Activated B cell treated with CpG ODN at 0.5 μM for 24 hours (primary cell): ENCODE measurements at regions of chr20 and their contacts with region 1.

Region 1: DNA sequence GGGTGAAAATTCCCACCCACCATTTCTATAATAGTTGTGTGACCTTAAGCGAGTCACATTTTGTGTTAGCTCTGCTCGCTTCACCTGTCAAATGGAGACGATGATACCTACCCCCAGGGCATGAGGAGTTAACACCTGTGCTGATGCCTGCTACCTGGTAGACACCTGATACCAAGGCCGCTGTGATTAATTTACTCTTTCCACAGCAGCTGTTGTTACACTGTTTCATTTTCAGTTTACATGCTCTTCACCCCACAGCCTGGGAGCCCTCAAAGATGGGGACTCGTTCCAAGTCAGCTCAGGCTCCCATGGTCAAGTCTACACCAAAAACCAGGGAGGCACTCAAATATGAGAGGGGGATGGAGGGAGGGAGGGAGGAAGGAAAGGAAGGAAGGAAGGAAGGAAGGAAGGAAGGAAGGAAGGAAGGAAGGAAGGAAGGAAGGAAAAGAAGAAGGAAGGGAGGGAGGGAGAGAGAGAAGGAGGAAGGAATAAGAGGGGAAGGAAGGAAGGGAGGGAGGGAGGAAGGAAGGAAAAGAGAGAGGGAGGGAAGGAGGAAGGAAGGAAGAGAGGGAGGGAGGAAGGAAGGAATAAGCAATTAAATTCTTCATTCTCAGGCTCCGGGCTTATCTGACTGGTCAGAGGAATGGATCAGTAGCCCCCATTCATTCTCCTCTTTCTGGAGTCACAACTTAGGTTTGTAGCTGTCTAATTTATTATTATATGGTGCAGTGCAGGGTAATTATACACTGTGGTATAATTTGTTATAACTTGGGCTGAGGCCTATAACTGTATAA is 40.9 kb downstream of the PDYN start:
- DNase-seq: no peak
- ATAC-seq: peak; percentile 15
- H3K4me3 Mint-ChIP-seq: peak overlapping the region; percentile 55
- H3K27ac Mint-ChIP-seq: peak overlapping the region; percentile 99
- H3K4me1 Mint-ChIP-seq: peaks cover 45% of the 10 kb centered on the region
- H3K27me3 Mint-ChIP-seq: no peaks in the 10 kb centered on the region
- CTCF ChIP-seq: no peak

Region 2: DNA sequence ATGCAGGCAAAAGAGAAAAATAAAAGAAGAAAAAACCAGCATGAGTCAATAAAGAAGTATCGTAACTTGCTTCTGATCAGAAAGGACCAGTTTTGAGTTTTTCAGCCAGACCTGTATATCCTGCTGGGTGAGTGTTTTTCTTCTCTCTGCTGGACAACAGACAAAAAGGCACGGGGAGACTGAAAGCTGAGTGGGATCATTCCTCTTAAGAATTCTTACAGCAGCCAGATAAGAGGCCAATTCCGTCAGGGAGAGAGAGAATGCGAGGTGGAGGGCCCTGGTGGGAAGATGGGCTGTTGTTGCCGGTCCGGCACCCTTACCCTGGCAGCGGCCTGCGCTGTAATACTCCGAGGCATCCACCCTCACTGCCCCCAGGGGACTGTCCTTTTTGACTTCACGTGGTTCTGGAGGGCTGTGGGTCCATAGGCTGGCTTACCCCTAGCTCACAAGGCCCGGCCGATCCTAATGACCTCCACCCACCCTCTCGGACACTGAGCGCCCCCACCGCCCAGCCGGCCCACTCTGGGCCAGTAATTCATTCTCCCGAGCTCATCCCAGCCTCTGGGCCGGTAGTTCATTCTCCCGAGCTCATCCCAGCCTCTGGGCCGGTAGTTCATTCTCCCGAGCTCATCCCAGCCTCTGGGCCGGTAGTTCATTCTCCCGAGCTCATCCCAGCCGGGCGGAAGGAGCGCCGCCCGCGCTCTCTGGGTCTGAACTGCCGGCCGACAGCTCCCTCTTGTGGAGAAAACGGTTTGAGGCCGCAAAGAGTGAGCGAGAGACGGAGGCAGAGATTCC is 176.1 kb before region 1 on chr20:
- CTCF ChIA-PET with region 1: interaction called, 3 read pairs
- POLR2A ChIA-PET with region 1: no interaction called
- intact Hi-C with region 1: loop called (anchors 1 kb)
- DNase-seq: peak; percentile 80
- ATAC-seq: peak; percentile 94
- H3K4me3 Mint-ChIP-seq: peak overlapping the region; percentile 83
- H3K27ac Mint-ChIP-seq: peak overlapping the region; percentile 57
- H3K4me1 Mint-ChIP-seq: peaks cover 17% of the 10 kb centered on the region
- H3K27me3 Mint-ChIP-seq: peaks cover 7% of the 10 kb centered on the region
- CTCF ChIP-seq: peak; percentile 22

Region 3: GRCh38 chr20:1844325-1845162 is 108.4 kb before region 1 on chr20:
- CTCF ChIA-PET with region 1: interaction called, 3 read pairs
- POLR2A ChIA-PET with region 1: interaction called, 4 read pairs
- intact Hi-C with region 1: loop called (anchors 1 kb)
- DNase-seq: peak; percentile 61
- ATAC-seq: peak; percentile 98
- H3K4me3 Mint-ChIP-seq: peak overlapping the region; percentile 65
- H3K27ac Mint-ChIP-seq: peak overlapping the region; percentile 78
- H3K4me1 Mint-ChIP-seq: peaks cover 73% of the 10 kb centered on the region
- H3K27me3 Mint-ChIP-seq: no peaks in the 10 kb centered on the region
- CTCF ChIP-seq: no peak

Region 4: DNA sequence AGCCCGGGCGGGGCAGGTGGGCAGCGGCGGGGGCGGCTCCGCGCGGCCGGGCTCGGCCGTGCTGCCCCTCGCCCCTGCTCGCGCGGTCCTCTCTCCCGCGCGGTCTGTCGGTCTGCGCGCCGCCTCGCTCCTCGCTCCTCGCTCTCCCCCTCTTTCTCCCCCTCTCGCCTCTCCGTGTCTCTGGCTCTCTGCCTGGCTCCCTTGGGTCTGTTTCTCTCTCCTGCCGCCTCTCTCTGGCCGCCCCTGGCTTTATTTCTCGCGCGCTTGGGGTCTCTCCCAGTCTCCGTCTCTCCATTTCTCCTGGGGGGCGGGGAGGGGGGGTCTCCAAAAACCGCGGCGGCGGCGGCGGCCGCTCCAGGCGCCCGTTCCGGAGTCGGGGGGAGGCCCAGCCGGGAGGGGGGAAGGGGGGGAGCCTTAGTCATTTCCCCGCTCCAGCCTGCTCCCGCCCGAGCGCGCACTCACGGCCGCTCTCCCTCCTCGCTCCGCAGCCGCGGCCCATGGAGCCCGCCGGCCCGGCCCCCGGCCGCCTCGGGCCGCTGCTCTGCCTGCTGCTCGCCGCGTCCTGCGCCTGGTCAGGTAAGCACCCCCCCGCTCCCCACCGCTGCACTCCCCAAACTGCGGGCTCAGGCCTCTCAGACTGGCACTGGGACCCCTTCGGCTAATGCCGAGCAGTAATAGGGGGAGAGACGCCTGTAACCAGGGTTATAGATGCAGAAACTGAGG is 57.8 kb before region 1 on chr20 and contains the start of gene SIRPA:
- CTCF ChIA-PET with region 1: interaction called, 4 read pairs
- POLR2A ChIA-PET with region 1: interaction called, 21 read pairs
- intact Hi-C with region 1: loop called (anchors 1 kb)
- DNase-seq: no peak
- ATAC-seq: peak; percentile 7
- H3K4me3 Mint-ChIP-seq: peak within 1 kb of the TSS; percentile 83
- H3K27ac Mint-ChIP-seq: peak within 1 kb of the TSS; percentile 79
- H3K4me1 Mint-ChIP-seq: peaks cover 56% of the 10 kb centered on the region
- H3K27me3 Mint-ChIP-seq: no peaks in the 10 kb centered on the region
- CTCF ChIP-seq: no peak
- total RNA-seq, gene SIRPA: 10.1 and 10.2 TPM in 2 replicates

Region 5: GRCh38 chr20:2101865-2102584 is 149.1 kb after region 1 on chr20:
- CTCF ChIA-PET with region 1: no interaction called
- POLR2A ChIA-PET with region 1: interaction called, 13 read pairs
- intact Hi-C with region 1: loop called (anchors 1 kb)
- DNase-seq: peak; percentile 87
- ATAC-seq: peak; percentile 82
- H3K4me3 Mint-ChIP-seq: peak overlapping the region; percentile 93
- H3K27ac Mint-ChIP-seq: peak overlapping the region; percentile 100
- H3K4me1 Mint-ChIP-seq: peaks cover 41% of the 10 kb centered on the region
- H3K27me3 Mint-ChIP-seq: no peaks in the 10 kb centered on the region
- CTCF ChIP-seq: no peak